ENCODE measurements at regions of chr12 and their contacts with region 1.

Region 1: GRCh38 chr12:6965026-6965661 is 5.3 kb downstream of the PHB2 start:
- DNase-seq: peak; percentile 92
- H3K4me3 Mint-ChIP-seq: no peak overlapping the region
- H3K27ac Mint-ChIP-seq: peak overlapping the region; percentile 83
- H3K4me1 Mint-ChIP-seq: peaks cover 74% of the 10 kb centered on the region
- H3K27me3 Mint-ChIP-seq: no peaks in the 10 kb centered on the region

Region 2: DNA sequence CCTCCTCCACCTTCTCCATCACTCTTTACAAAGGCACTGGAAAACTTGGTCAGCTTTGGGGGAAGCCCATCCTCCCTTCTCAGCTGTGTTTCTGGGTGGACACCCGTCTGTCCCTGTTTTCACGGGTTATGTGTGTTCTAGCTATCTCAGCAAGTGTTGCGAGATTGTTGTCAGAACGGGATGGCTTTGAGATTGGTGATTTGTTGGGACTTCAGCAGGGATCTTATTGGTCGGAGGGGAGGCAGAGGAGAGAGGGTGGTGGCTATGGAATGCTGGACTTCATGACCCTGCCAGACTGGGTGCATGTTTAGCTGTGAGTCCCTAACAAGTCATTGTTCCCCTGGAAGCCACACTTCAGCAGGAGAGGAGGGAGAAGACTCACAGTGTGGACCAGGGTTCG is 111.1 kb before region 1 on chr12:
- CTCF ChIA-PET with region 1: no interaction called
- DNase-seq: no peak
- H3K4me3 Mint-ChIP-seq: peak overlapping the region; percentile 84
- H3K27ac Mint-ChIP-seq: peak overlapping the region; percentile 100
- H3K4me1 Mint-ChIP-seq: peaks cover 40% of the 10 kb centered on the region
- H3K27me3 Mint-ChIP-seq: no peaks in the 10 kb centered on the region

Region 3: GRCh38 chr12:6927379-6928024 is 37.6 kb before region 1 on chr12 and contains the start of gene ATN1:
- CTCF ChIA-PET with region 1: interaction called, 39 read pairs
- DNase-seq: peak; percentile 70
- H3K4me3 Mint-ChIP-seq: peak within 1 kb of the TSS; percentile 81
- H3K27ac Mint-ChIP-seq: peak within 1 kb of the TSS; percentile 67
- H3K4me1 Mint-ChIP-seq: peaks cover 67% of the 10 kb centered on the region
- H3K27me3 Mint-ChIP-seq: peaks cover 23% of the 10 kb centered on the region

Region 4: GRCh38 chr12:6937481-6938297 is 27.5 kb before region 1 on chr12:
- CTCF ChIA-PET with region 1: interaction called, 491 read pairs
- DNase-seq: peak; percentile 95
- H3K4me3 Mint-ChIP-seq: peak overlapping the region; percentile 82
- H3K27ac Mint-ChIP-seq: peak overlapping the region; percentile 97
- H3K4me1 Mint-ChIP-seq: peaks cover 58% of the 10 kb centered on the region
- H3K27me3 Mint-ChIP-seq: no peaks in the 10 kb centered on the region

Region 5: DNA sequence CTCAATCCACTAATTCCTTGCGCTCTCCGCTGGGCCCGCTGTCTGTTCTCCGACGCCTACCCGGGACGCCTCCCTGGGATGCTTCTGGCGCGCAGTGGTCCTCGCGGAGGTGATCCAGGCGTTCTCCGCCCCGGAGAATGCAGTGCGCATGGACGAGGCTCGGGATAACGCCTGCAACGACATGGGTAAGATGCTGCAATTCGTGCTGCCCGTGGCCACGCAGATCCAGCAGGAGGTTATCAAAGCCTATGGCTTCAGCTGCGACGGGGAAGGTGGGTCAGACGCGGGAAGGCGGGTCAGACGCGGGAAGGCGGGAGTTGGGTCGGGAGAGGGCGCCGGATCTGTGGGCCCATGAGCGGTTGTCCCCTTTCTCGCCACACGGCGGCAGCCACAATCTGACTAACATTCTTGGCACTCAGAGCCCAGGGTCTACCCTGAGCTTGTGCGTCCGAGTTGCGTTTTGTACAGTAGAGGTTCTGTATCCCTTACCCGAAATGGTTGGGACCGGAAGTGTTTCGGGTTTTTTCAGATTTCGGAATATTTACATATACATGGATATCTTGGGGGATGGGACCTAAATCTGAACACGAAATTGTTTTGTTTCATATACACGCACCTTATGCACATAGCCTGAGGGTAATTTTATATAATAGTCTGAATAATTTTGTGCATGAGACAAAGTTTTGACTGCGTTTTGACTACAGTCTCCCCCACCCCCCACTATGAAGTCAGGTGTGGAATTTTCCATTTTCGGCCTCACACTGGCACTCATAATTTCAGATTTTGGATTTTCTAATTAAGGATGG is 20.6 kb before region 1 on chr12:
- CTCF ChIA-PET with region 1: interaction called, 491 read pairs
- DNase-seq: peak; percentile 93
- H3K4me3 Mint-ChIP-seq: peak overlapping the region; percentile 84
- H3K27ac Mint-ChIP-seq: peak overlapping the region; percentile 96
- H3K4me1 Mint-ChIP-seq: peaks cover 67% of the 10 kb centered on the region
- H3K27me3 Mint-ChIP-seq: no peaks in the 10 kb centered on the region

Region 6: GRCh38 chr12:6953442-6954315 is 11.5 kb before region 1 on chr12:
- CTCF ChIA-PET with region 1: interaction called, 491 read pairs
- DNase-seq: peak; percentile 87
- H3K4me3 Mint-ChIP-seq: peak overlapping the region; percentile 100
- H3K27ac Mint-ChIP-seq: peak overlapping the region; percentile 96
- H3K4me1 Mint-ChIP-seq: peaks cover 73% of the 10 kb centered on the region
- H3K27me3 Mint-ChIP-seq: peaks cover 3% of the 10 kb centered on the region

Region 7: GRCh38 chr12:7108796-7109571 is 143.8 kb after region 1 on chr12 and contains the start of gene C1RL:
- CTCF ChIA-PET with region 1: interaction called, 13 read pairs
- DNase-seq: peak; percentile 87
- H3K4me3 Mint-ChIP-seq: peak within 1 kb of the TSS; percentile 97
- H3K27ac Mint-ChIP-seq: peak within 1 kb of the TSS; percentile 95
- H3K4me1 Mint-ChIP-seq: peaks cover 68% of the 10 kb centered on the region
- H3K27me3 Mint-ChIP-seq: no peaks in the 10 kb centered on the region